ENCODE measurements at regions of chr7 and their contacts with region 1.

Region 1: GRCh38 chr7:132709971-132710567 is 133.8 kb upstream of the PLXNA4 start:
- DNase-seq: peak in 1 of 2 experiments; percentile 63
- H3K4me3 ChIP-seq: no peak overlapping the region
- H3K27ac ChIP-seq: no peak overlapping the region
- H3K4me1 ChIP-seq: no peaks in the 10 kb centered on the region
- H3K27me3 ChIP-seq: no peaks in the 10 kb centered on the region
- CTCF ChIP-seq: peak in 2 of 3 experiments; percentile 35 to 51; a peak in 3 of 4 replicates
- EP300 ChIP-seq: no peak
- POLR2A ChIP-seq: no peak
- RAD21 ChIP-seq: peak; percentile 36 to 55; a peak in 3 of 4 replicates

Region 2: DNA sequence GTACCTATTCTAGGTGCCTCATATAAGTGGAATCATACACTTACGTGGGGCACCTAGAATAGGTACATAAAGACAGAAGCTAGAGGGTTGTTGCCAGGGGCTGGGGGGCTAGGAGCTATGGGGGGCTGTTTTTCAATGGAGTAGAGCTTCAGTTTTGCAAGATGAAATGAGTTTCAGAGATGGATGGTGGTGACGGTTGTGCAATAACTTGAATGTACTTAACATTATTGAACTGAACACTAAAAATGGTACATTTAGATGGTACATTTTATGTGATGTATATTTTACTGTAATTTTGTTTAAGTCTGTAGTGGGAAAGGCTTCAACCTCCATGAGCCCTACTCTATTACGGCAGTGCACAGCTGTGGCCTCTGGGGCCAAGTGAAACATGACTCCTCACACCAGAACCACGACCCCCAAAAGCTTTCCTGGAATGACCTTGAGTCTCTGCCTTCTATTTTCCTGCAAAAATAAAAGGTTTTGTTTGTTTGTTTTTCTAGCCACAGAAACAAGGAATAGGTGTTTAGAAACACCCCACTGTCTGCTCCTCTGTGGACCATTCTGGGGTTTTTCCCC is 13.5 kb after region 1 on chr7:
- CTCF ChIA-PET with region 1: interaction called, 43 read pairs
- POLR2A ChIA-PET with region 1: no interaction called
- DNase-seq: no peak
- H3K4me3 ChIP-seq: no peak overlapping the region
- H3K27ac ChIP-seq: no peak overlapping the region
- H3K4me1 ChIP-seq: peaks cover 0 to 1% (median 0%) of the 10 kb centered on the region in 4 experiments; a peak in 1 of 7 replicates
- H3K27me3 ChIP-seq: no peaks in the 10 kb centered on the region; a peak in 1 of 7 replicates
- CTCF ChIP-seq: no peak
- EP300 ChIP-seq: no peak
- POLR2A ChIP-seq: no peak
- RAD21 ChIP-seq: no peak

Region 3: DNA sequence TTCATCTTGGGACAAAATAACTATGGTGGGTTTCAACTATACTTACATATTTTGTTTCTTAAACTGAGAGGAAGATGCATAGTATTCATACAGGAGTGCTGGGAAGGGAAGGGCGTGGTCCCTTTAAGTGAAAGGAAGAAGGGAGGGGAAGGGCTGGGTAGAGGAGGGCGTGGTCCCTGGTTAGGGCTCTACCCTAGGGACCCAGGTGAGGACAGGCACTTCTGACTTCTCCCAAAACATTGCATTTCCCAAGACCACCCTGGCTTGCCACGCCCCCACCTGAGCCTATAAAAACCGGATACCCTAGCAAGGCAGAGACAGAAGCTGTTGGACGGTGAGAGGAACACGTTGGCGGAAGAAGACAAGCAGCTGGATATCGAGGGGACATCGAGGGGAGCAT is 23.8 kb after region 1 on chr7:
- CTCF ChIA-PET with region 1: interaction called, 11 read pairs
- POLR2A ChIA-PET with region 1: no interaction called
- DNase-seq: no peak
- H3K4me3 ChIP-seq: no peak overlapping the region
- H3K27ac ChIP-seq: no peak overlapping the region
- H3K4me1 ChIP-seq: no peaks in the 10 kb centered on the region
- H3K27me3 ChIP-seq: no peaks in the 10 kb centered on the region; a peak in 1 of 7 replicates
- CTCF ChIP-seq: no peak
- EP300 ChIP-seq: no peak
- POLR2A ChIP-seq: no peak
- RAD21 ChIP-seq: no peak